Activated B cell treated with CpG ODN at 0.5 μM for 24 hours (primary cell): ENCODE measurements at regions of chr11 and their contacts with region 1.

Region 1: GRCh38 chr11:57567515-57568329 is at the start of gene UBE2L6:
- DNase-seq: peak; percentile 80
- ATAC-seq: peak; percentile 70
- H3K4me3 Mint-ChIP-seq: peak within 1 kb of the TSS; percentile 99
- H3K27ac Mint-ChIP-seq: peak within 1 kb of the TSS; percentile 97
- H3K4me1 Mint-ChIP-seq: peaks cover 40% of the 10 kb centered on the region
- H3K27me3 Mint-ChIP-seq: no peaks in the 10 kb centered on the region
- CTCF ChIP-seq: peak; percentile 41
- total RNA-seq, gene UBE2L6: 63.4 and 69.2 TPM in 2 replicates

Region 2: GRCh38 chr11:57417056-57417455 is 150.7 kb before region 1 on chr11:
- CTCF ChIA-PET with region 1: no interaction called
- POLR2A ChIA-PET with region 1: no interaction called
- intact Hi-C with region 1: no loop called
- DNase-seq: no peak
- ATAC-seq: no peak
- H3K4me3 Mint-ChIP-seq: no peak overlapping the region
- H3K27ac Mint-ChIP-seq: no peak overlapping the region
- H3K4me1 Mint-ChIP-seq: peaks cover 20% of the 10 kb centered on the region
- H3K27me3 Mint-ChIP-seq: no peaks in the 10 kb centered on the region
- CTCF ChIP-seq: no peak

Region 3: DNA sequence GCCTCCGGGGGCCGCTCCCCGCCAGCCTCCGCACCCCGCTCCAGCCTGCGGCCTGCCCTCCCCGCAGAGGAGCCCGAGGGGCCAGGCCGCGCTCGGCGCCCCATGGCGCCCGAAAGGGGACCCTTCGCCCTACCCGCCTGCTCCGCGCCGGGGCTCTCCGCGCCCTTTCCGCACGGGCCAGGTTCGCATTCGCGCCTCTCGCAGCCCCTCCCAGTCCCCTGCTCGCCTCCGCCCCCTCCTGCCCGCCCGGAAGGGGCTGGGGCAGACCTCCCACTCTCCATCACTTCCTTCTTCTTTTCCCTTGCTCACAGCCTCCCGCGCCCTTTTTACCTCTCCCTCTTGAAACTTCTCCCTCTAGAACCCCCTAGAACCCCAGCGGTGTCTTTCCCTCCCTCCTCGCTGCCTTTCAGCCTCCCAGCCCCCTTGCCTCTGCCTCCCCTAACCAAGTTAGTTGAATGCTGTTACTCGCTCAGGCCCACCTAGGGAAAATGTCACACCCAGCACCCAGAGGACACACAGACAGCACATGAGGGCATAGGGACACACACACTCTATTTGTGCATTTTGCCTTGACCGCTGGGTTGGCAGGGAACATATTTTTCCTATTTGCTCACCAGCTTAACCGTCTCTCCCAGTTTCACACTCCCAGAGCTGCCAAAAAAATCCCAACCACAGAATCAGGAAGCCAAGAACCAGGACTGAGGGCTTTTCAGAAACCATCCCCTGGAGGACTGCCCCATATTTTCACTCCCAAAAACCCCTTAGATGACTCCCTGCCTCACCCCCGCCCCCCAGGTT is 140.6 kb before region 1 on chr11 and contains the start of gene SLC43A3:
- CTCF ChIA-PET with region 1: no interaction called
- POLR2A ChIA-PET with region 1: interaction called, 5 read pairs
- intact Hi-C with region 1: loop called (anchors 1 kb)
- DNase-seq: peak; percentile 72
- ATAC-seq: peak; percentile 69
- H3K4me3 Mint-ChIP-seq: peak within 1 kb of the TSS; percentile 92
- H3K27ac Mint-ChIP-seq: peak within 1 kb of the TSS; percentile 91
- H3K4me1 Mint-ChIP-seq: peaks cover 47% of the 10 kb centered on the region
- H3K27me3 Mint-ChIP-seq: no peaks in the 10 kb centered on the region
- CTCF ChIP-seq: no peak
- total RNA-seq, gene SLC43A3: 213 and 237 TPM in 2 replicates

Region 4: GRCh38 chr11:57546869-57547475 is 20.8 kb before region 1 on chr11:
- CTCF ChIA-PET with region 1: interaction called, 9 read pairs
- POLR2A ChIA-PET with region 1: interaction called, 4 read pairs
- intact Hi-C with region 1: loop called (anchors 2 kb)
- DNase-seq: no peak
- ATAC-seq: no peak
- H3K4me3 Mint-ChIP-seq: no peak overlapping the region
- H3K27ac Mint-ChIP-seq: peak overlapping the region; percentile 80
- H3K4me1 Mint-ChIP-seq: peaks cover 20% of the 10 kb centered on the region
- H3K27me3 Mint-ChIP-seq: no peaks in the 10 kb centered on the region
- CTCF ChIP-seq: no peak

Region 5: DNA sequence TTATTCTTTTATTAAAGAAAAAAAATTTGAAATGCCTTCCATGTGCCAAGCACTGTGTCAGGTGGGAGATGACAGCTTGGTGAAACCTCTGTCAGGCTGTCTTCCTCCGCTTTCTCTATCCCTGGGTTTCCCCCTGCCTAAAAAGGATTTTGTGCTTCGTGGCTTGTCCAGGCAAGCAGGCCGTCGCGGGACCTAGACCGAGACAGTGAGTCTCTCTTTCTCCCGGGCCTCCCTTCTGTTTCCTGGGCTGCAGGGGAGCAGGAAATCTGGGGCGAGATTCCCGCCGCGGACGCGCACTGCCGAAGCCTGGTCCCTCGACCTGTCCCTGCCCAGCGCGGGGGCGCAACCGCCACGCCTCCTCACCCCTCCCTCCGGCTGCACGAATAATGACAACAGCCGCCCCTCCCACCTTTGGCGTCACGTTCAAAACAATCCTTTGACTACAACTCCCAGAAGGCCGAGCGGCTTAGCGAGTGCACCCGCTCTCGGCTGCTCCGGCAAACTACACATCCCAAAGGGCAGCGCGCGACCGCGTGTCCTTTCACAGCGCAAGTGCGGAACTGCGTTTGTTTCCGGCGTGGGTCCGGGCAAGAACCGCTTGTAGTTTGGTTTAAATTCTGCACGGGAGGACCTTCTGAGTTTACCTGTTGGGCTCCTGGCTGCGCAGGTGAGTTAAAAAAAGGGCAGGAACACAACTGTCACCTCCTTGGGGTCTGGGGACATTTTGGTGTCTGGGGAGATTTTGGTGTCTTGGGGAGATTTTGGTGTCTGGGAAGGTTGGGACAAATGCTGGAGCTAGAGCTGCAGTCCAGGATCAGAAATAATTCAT is 89.7 kb after region 1 on chr11 and contains the start of gene CLP1:
- CTCF ChIA-PET with region 1: no interaction called
- POLR2A ChIA-PET with region 1: interaction called, 7 read pairs
- intact Hi-C with region 1: loop called (anchors 1 kb)
- DNase-seq: peak; percentile 96
- ATAC-seq: peak; percentile 97
- H3K4me3 Mint-ChIP-seq: peak within 1 kb of the TSS; percentile 99
- H3K27ac Mint-ChIP-seq: peak within 1 kb of the TSS; percentile 94
- H3K4me1 Mint-ChIP-seq: peaks cover 23% of the 10 kb centered on the region
- H3K27me3 Mint-ChIP-seq: no peaks in the 10 kb centered on the region
- CTCF ChIP-seq: no peak
- total RNA-seq, gene CLP1: 20.4 and 20.9 TPM in 2 replicates

Region 6: GRCh38 chr11:58286249-58286648 is 718.5 kb after region 1 on chr11:
- CTCF ChIA-PET with region 1: interaction called, 3 read pairs
- POLR2A ChIA-PET with region 1: no interaction called
- intact Hi-C with region 1: loop called (anchors 5 kb)
- DNase-seq: no peak
- ATAC-seq: no peak
- H3K4me3 Mint-ChIP-seq: no peak overlapping the region
- H3K27ac Mint-ChIP-seq: no peak overlapping the region
- H3K4me1 Mint-ChIP-seq: no peaks in the 10 kb centered on the region
- H3K27me3 Mint-ChIP-seq: peaks cover 20% of the 10 kb centered on the region
- CTCF ChIP-seq: no peak

Region 7: DNA sequence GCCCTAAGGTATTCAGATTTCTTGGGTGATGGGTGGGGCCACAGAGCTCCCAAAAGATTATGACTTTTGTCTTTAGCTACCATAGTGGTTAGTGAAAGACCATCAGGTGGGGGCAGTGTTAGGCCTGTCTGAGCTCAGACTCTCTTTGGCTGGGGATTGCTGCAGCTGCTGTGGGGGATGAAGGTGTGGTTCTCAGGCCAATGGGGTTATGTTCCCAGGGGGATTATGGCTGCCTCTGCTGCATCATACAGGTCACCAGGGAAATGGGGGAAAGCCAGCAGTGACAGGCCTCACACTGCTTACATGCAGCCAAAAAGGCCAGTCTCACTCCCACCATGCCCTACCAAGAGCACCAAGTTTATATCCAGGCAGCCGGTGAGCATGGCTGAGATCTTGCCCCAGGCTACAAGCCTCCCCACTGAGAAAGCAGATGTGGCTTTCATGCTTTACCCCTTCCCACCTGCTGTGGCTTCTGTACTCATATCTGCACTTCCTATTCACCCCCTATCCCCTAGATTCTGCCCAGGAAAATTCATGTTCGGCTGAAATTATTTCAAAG is 1079.5 kb after region 1 on chr11:
- CTCF ChIA-PET with region 1: no interaction called
- POLR2A ChIA-PET with region 1: no interaction called
- intact Hi-C with region 1: loop called (anchors 10 kb)
- DNase-seq: peak; percentile 33
- ATAC-seq: peak; percentile 93
- H3K4me3 Mint-ChIP-seq: peak overlapping the region; percentile 3
- H3K27ac Mint-ChIP-seq: peak overlapping the region; percentile 21
- H3K4me1 Mint-ChIP-seq: peaks cover 20% of the 10 kb centered on the region
- H3K27me3 Mint-ChIP-seq: peaks cover 2% of the 10 kb centered on the region
- CTCF ChIP-seq: no peak